ENCODE measurements at regions of chr14 and their contacts with region 1.

Region 1: DNA sequence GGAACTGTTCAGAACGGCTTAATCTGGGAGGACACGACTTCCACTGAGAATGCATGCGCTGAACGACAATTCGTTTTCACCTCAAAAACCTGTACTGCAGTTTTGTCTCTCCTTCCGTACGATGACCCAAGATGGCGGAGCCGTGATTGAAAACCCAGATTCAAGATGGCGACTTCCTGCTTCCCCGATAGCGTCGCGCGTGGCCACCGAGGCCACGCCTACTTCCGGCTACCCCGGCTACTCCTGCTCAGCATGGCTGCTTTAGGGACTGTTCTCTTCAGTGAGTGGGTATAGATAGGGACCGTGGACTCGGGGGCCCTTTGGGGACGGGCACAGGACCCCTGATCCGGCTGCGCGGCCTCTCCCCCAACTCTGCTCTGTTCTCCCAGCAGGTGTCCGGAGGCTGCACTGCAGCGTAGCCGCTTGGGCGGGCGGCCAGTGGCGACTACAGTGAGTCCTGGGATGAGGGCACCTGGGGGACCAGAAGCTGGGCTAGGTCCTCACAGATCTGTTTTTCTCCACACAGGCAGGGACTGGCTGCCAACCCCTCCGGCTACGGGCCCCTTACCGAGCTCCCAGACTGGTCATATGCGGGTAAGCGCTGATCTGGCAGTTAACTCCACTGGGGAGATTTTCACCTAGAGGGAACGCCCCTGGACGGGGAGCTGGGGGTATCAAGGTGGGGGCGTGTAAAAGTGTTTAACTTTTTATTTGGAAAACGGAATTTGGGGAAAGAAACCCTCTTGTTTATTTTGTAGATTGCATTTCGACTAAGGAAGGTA is at the start of gene MRPL52:
- DNase-seq: peak; percentile 72
- ATAC-seq: peak; percentile 79
- H3K4me3 Mint-ChIP-seq: peak within 1 kb of the TSS; percentile 90
- H3K27ac Mint-ChIP-seq: peak within 1 kb of the TSS; percentile 97
- H3K4me1 Mint-ChIP-seq: peaks cover 29% of the 10 kb centered on the region
- H3K27me3 Mint-ChIP-seq: peaks cover 3% of the 10 kb centered on the region; the same call in 1 of the 2 replicates
- CTCF ChIP-seq: no peak
- total RNA-seq, gene MRPL52: 170 to 200 TPM (median 200 TPM) in 3 replicates

Region 2: GRCh38 chr14:22796087-22796707 is 33.7 kb before region 1 on chr14:
- CTCF ChIA-PET with region 1: no interaction called
- POLR2A ChIA-PET with region 1: interaction called, 12 read pairs
- DNase-seq: no peak
- ATAC-seq: no peak
- H3K4me3 Mint-ChIP-seq: no peak overlapping the region
- H3K27ac Mint-ChIP-seq: peak overlapping the region; percentile 53
- H3K4me1 Mint-ChIP-seq: peaks cover 16% of the 10 kb centered on the region
- H3K27me3 Mint-ChIP-seq: no peaks in the 10 kb centered on the region; the same call in 1 of the 2 replicates
- CTCF ChIP-seq: no peak